CD4-positive, alpha-beta memory T cell (primary cell): ENCODE measurements at regions of chr9 and their contacts with region 1.

Region 1: GRCh38 chr9:113275157-113276131 is at the starts of genes CDC26 and PRPF4:
- DNase-seq: peak; percentile 91 to 97 (median 94)
- H3K4me3 ChIP-seq: peak within 1 kb of the TSS; percentile 86 to 92
- H3K4me3 Mint-ChIP-seq: no peak within 1 kb of the TSS
- H3K27ac ChIP-seq: peak within 1 kb of the TSS; percentile 93
- H3K27ac Mint-ChIP-seq: no peak within 1 kb of the TSS
- H3K4me1 ChIP-seq: peaks cover 22% of the 10 kb centered on the region
- H3K4me1 Mint-ChIP-seq: peaks cover 14 to 32% (median 21%) of the 10 kb centered on the region in 4 donors
- H3K27me3 ChIP-seq: no peaks in the 10 kb centered on the region
- H3K27me3 Mint-ChIP-seq: no peaks in the 10 kb centered on the region
- total RNA-seq, gene CDC26: 44.4 to 47.3 TPM
- total RNA-seq, gene PRPF4: 20.7 to 23.2 TPM

Region 2: GRCh38 chr9:112717661-112718341 is 557.6 kb before region 1 on chr9 and contains the start of gene INIP:
- CTCF ChIA-PET with region 1: no interaction called
- POLR2A ChIA-PET with region 1: no interaction called
- intact Hi-C with region 1: loop called (anchors 5 kb)
- DNase-seq: peak; percentile 97 to 98 (median 98)
- H3K4me3 ChIP-seq: peak within 1 kb of the TSS; percentile 78 to 95
- H3K4me3 Mint-ChIP-seq: peak within 1 kb of the TSS; percentile 93 to 99 (median 98)
- H3K27ac ChIP-seq: peak within 1 kb of the TSS; percentile 88
- H3K27ac Mint-ChIP-seq: peak within 1 kb of the TSS; percentile 94 to 99 (median 99)
- H3K4me1 ChIP-seq: peaks cover 25% of the 10 kb centered on the region
- H3K4me1 Mint-ChIP-seq: peaks cover 15 to 37% (median 26%) of the 10 kb centered on the region in 4 donors
- H3K27me3 ChIP-seq: no peaks in the 10 kb centered on the region
- H3K27me3 Mint-ChIP-seq: no peaks in the 10 kb centered on the region
- total RNA-seq, gene INIP: 25.2 to 33.4 TPM

Region 3: DNA sequence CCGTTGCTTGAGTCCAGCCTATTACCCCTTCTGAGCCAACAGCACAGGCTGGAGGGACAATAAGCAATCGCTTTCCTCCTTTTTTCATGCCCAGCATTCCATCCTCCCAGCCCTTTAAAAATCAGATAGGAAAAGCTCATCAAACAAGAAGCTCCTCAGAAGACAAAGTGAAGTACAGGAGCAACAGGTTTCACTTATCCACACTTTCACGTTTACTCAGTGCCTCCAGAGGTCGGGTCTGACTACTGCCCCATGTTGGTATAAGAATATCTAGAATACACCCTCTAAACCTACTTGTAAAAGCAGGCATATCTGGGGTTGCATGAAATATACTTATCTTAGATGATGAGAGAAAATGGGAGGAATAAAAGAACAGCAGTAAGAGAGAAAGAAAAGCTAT is 78.5 kb before region 1 on chr9:
- CTCF ChIA-PET with region 1: no interaction called
- POLR2A ChIA-PET with region 1: no interaction called
- intact Hi-C with region 1: no loop called
- DNase-seq: no peak
- H3K4me3 ChIP-seq: no peak overlapping the region
- H3K4me3 Mint-ChIP-seq: no peak overlapping the region
- H3K27ac ChIP-seq: no peak overlapping the region
- H3K27ac Mint-ChIP-seq: peak overlapping the region in 3 of 7 donors; percentile 1 to 65 (median 37)
- H3K4me1 ChIP-seq: no peaks in the 10 kb centered on the region
- H3K4me1 Mint-ChIP-seq: peaks cover 0 to 1% (median 0%) of the 10 kb centered on the region in 4 donors
- H3K27me3 ChIP-seq: no peaks in the 10 kb centered on the region
- H3K27me3 Mint-ChIP-seq: no peaks in the 10 kb centered on the region

Region 4: GRCh38 chr9:113221003-113221799 is 54.2 kb before region 1 on chr9 and contains the starts of genes FKBP15 and SLC31A1:
- CTCF ChIA-PET with region 1: interaction called, 25 read pairs
- POLR2A ChIA-PET with region 1: interaction called, 26 read pairs
- intact Hi-C with region 1: loop called (anchors 1 kb)
- DNase-seq: peak; percentile 95 to 98 (median 97)
- H3K4me3 ChIP-seq: peak within 1 kb of the TSS; percentile 89 to 91
- H3K4me3 Mint-ChIP-seq: peak within 1 kb of the TSS; percentile 92 to 98 (median 96)
- H3K27ac ChIP-seq: peak within 1 kb of the TSS; percentile 90
- H3K27ac Mint-ChIP-seq: peak within 1 kb of the TSS; percentile 91 to 98 (median 96)
- H3K4me1 ChIP-seq: peaks cover 34% of the 10 kb centered on the region
- H3K4me1 Mint-ChIP-seq: peaks cover 28 to 48% (median 38%) of the 10 kb centered on the region in 4 donors
- H3K27me3 ChIP-seq: no peaks in the 10 kb centered on the region
- H3K27me3 Mint-ChIP-seq: no peaks in the 10 kb centered on the region
- total RNA-seq, gene FKBP15: 34.3 to 34.9 TPM
- total RNA-seq, gene SLC31A1: 4.1 to 4.2 TPM

Region 5: DNA sequence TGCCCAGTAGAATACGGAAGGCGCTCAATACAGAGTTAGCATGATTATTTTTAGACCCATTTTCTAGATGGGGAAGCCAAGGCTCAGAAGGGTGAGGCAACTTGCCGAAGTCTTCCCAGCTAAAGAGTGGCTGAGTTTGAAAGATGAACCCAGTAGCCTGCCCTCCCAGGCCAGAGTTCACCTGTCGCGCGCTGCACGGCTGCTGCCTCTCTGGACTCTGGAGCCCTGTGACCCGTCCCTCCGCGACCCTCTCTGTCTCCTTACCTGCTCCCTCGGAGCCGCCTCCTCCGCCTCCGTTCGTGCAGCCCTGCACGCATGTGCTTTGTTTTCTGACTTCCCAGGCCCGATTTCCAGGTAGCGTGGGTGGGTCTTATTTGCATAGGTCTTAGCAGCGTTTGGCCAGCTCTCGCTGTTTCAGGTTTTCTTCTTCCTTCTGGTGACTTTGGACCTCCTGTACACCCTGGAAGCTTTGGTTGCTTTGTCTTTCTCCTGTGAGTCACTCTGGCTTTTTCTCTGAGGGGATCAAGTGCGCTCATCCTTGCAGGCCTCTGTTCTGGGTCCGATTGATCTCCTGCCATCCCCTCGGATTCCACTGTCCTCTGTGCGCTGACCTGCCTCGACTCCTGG is 27.5 kb after region 1 on chr9 and contains the start of gene RNF183:
- CTCF ChIA-PET with region 1: no interaction called
- POLR2A ChIA-PET with region 1: no interaction called
- intact Hi-C with region 1: no loop called
- DNase-seq: no peak
- H3K4me3 ChIP-seq: no peak within 1 kb of the TSS
- H3K4me3 Mint-ChIP-seq: no peak within 1 kb of the TSS
- H3K27ac ChIP-seq: no peak within 1 kb of the TSS
- H3K27ac Mint-ChIP-seq: peak within 1 kb of the TSS in 1 of 7 donors; percentile 23
- H3K4me1 ChIP-seq: no peaks in the 10 kb centered on the region
- H3K4me1 Mint-ChIP-seq: peaks cover 0 to 1% (median 0%) of the 10 kb centered on the region in 4 donors
- H3K27me3 ChIP-seq: no peaks in the 10 kb centered on the region
- H3K27me3 Mint-ChIP-seq: peaks cover 9 to 10% of the 10 kb centered on the region in 2 donors
- total RNA-seq, gene RNF183: not detected

Region 6: GRCh38 chr9:113340017-113340699 is 64.7 kb after region 1 on chr9 and contains the start of gene WDR31:
- CTCF ChIA-PET with region 1: interaction called, 21 read pairs
- POLR2A ChIA-PET with region 1: interaction called, 10 read pairs
- intact Hi-C with region 1: loop called (anchors 1 kb)
- DNase-seq: peak; percentile 61 to 78 (median 75)
- H3K4me3 ChIP-seq: peak within 1 kb of the TSS; percentile 8 to 79
- H3K4me3 Mint-ChIP-seq: peak within 1 kb of the TSS; percentile 82 to 92 (median 87)
- H3K27ac ChIP-seq: peak within 1 kb of the TSS; percentile 28
- H3K27ac Mint-ChIP-seq: peak within 1 kb of the TSS in 6 of 7 donors; percentile 51 to 73 (median 56)
- H3K4me1 ChIP-seq: peaks cover 10% of the 10 kb centered on the region
- H3K4me1 Mint-ChIP-seq: peaks cover 7 to 23% (median 15%) of the 10 kb centered on the region in 4 donors
- H3K27me3 ChIP-seq: no peaks in the 10 kb centered on the region
- H3K27me3 Mint-ChIP-seq: peaks cover 1 to 4% of the 10 kb centered on the region in 2 donors
- total RNA-seq, gene WDR31: 0.33 to 0.67 TPM

Region 7: GRCh38 chr9:113401027-113401792 is 125.8 kb after region 1 on chr9 and contains the start of gene ALAD:
- CTCF ChIA-PET with region 1: interaction called, 38 read pairs
- POLR2A ChIA-PET with region 1: interaction called, 21 read pairs
- intact Hi-C with region 1: loop called (anchors 1 kb)
- DNase-seq: peak; percentile 98 to 100 (median 99)
- H3K4me3 ChIP-seq: peak within 1 kb of the TSS; percentile 34 to 96
- H3K4me3 Mint-ChIP-seq: peak within 1 kb of the TSS; percentile 91 to 98 (median 94)
- H3K27ac ChIP-seq: peak within 1 kb of the TSS; percentile 52
- H3K27ac Mint-ChIP-seq: peak within 1 kb of the TSS; percentile 77 to 94 (median 89)
- H3K4me1 ChIP-seq: peaks cover 16% of the 10 kb centered on the region
- H3K4me1 Mint-ChIP-seq: peaks cover 14 to 31% (median 23%) of the 10 kb centered on the region in 4 donors
- H3K27me3 ChIP-seq: no peaks in the 10 kb centered on the region
- H3K27me3 Mint-ChIP-seq: no peaks in the 10 kb centered on the region
- total RNA-seq, gene ALAD: 39.9 TPM

Region 8: GRCh38 chr9:113427629-113428028 is 152.2 kb after region 1 on chr9:
- CTCF ChIA-PET with region 1: no interaction called
- POLR2A ChIA-PET with region 1: no interaction called
- intact Hi-C with region 1: no loop called
- DNase-seq: no peak
- H3K4me3 ChIP-seq: no peak overlapping the region
- H3K4me3 Mint-ChIP-seq: no peak overlapping the region
- H3K27ac ChIP-seq: no peak overlapping the region
- H3K27ac Mint-ChIP-seq: no peak overlapping the region
- H3K4me1 ChIP-seq: no peaks in the 10 kb centered on the region
- H3K4me1 Mint-ChIP-seq: no peaks in the 10 kb centered on the region
- H3K27me3 ChIP-seq: no peaks in the 10 kb centered on the region
- H3K27me3 Mint-ChIP-seq: peaks cover 3 to 5% of the 10 kb centered on the region in 2 donors

Region 9: GRCh38 chr9:113578882-113579282 is 303.4 kb after region 1 on chr9:
- CTCF ChIA-PET with region 1: interaction called, 25 read pairs
- POLR2A ChIA-PET with region 1: interaction called, 11 read pairs
- intact Hi-C with region 1: loop called (anchors 2 kb)
- DNase-seq: peak; percentile 72 to 92 (median 81)
- H3K4me3 ChIP-seq: peak overlapping the region in 1 of 2 donors; percentile 47
- H3K4me3 Mint-ChIP-seq: peak overlapping the region; percentile 71 to 92 (median 82)
- H3K27ac ChIP-seq: peak overlapping the region; percentile 69
- H3K27ac Mint-ChIP-seq: peak overlapping the region; percentile 88 to 97 (median 96)
- H3K4me1 ChIP-seq: peaks cover 65% of the 10 kb centered on the region
- H3K4me1 Mint-ChIP-seq: peaks cover 57 to 88% (median 75%) of the 10 kb centered on the region in 4 donors
- H3K27me3 ChIP-seq: no peaks in the 10 kb centered on the region
- H3K27me3 Mint-ChIP-seq: no peaks in the 10 kb centered on the region

Region 10: GRCh38 chr9:113657703-113658544 is 382.5 kb after region 1 on chr9:
- CTCF ChIA-PET with region 1: interaction called, 137 read pairs
- POLR2A ChIA-PET with region 1: interaction called, 4 read pairs
- intact Hi-C with region 1: loop called (anchors 1 kb)
- DNase-seq: peak; percentile 67 to 76 (median 68)
- H3K4me3 ChIP-seq: no peak overlapping the region
- H3K4me3 Mint-ChIP-seq: no peak overlapping the region
- H3K27ac ChIP-seq: no peak overlapping the region
- H3K27ac Mint-ChIP-seq: peak overlapping the region in 2 of 7 donors; percentile 65 to 67
- H3K4me1 ChIP-seq: no peaks in the 10 kb centered on the region
- H3K4me1 Mint-ChIP-seq: peaks cover 0 to 6% (median 2%) of the 10 kb centered on the region in 4 donors
- H3K27me3 ChIP-seq: no peaks in the 10 kb centered on the region
- H3K27me3 Mint-ChIP-seq: peaks cover 10 to 16% of the 10 kb centered on the region in 2 donors